ENCODE measurements at regions of chr2 and their contacts with region 1.

Region 1: GRCh38 chr2:128321784-128322714 is 3.4 kb upstream of the HS6ST1 start:
- DNase-seq: peak; percentile 51
- ATAC-seq: peak; percentile 67
- H3K4me3 ChIP-seq: peak overlapping the region; percentile 58 to 63
- H3K27ac ChIP-seq: peak overlapping the region; percentile 89
- H3K4me1 ChIP-seq: peaks cover 1 to 21% of the 10 kb centered on the region in 2 experiments; a peak in 3 of 4 replicates
- H3K27me3 ChIP-seq: no peaks in the 10 kb centered on the region
- CTCF ChIP-seq: peak; percentile 31 to 82 (median 75); a peak in 5 of 6 replicates
- POLR2A ChIP-seq: no peak
- RAD21 ChIP-seq: peak; percentile 61

Region 2: DNA sequence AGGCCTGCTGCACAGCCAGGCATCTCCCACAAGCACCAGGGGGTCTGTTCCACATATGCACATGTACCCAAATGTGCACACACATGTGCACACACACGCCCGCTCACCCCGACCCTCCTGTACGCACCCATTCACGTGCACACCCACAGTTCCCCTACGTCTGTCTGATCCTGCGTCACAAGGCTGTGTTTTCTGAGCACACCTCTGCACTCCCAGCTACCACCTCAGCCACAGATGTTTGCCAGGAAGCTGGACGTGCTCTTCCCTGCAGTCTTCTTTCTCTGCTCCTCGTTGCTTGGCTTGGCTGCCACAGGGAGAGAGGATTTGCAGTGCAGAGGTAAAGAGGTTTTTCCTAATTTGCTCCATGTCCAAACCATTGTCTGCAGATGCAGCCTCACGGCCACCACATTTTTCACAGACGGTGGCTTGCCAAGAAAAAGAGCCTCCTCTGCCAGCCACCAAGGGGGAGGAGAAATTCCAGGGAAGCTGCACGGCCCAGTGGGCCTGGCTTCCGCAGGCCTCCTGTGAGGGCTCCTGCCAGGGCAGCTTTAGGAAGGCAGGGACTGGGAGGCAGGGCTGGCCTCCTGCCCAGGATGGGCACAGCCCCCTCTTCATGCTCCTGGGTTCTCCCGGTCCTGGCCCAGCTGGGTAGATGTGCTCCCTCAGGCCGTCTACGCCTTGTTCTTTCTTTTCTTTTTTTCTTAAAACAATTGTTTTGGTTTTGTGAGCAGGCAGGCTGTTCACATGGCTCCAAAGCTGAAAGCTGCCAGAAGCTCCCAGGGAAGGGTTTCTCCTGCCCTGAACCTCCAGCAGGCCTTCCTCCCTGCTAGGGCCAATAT is 25.9 kb after region 1 on chr2:
- CTCF ChIA-PET with region 1: no interaction called
- POLR2A ChIA-PET with region 1: no interaction called
- RAD21 ChIA-PET with region 1: no interaction called
- intact Hi-C with region 1: no loop called
- DNase-seq: no peak
- ATAC-seq: no peak
- H3K4me3 ChIP-seq: no peak overlapping the region
- H3K27ac ChIP-seq: no peak overlapping the region
- H3K4me1 ChIP-seq: no peaks in the 10 kb centered on the region
- H3K27me3 ChIP-seq: no peaks in the 10 kb centered on the region
- CTCF ChIP-seq: no peak
- POLR2A ChIP-seq: no peak
- RAD21 ChIP-seq: no peak

Region 3: DNA sequence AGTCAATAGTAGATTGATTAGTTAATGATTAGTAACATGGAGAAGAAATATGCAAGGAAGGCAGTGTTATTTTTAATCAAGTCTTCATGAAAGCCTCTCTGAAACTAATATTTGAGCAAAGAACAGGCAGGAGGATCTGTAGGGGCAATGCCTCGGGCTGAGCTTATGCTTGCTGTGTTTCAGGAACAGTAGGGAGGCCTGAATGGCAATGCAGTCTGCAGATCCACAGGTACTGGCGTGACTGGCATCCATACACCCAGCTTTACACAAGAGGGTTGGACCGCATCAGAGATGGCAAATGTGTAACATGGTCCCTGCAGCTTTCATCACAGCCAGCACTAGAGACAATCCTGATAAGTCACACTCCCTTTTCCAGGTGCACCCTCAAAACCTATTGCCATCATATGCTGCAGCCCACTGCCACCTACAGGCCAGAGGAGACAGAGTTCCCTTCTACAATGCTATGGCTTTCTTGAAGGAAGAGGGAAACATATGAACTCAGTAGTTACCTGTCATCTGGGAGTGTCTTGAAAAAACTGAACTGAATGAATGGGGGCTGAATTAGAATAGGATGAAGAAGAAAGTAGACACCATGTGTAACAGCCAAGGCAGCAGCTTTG is 1075.0 kb after region 1 on chr2:
- CTCF ChIA-PET with region 1: no interaction called
- POLR2A ChIA-PET with region 1: no interaction called
- RAD21 ChIA-PET with region 1: no interaction called
- intact Hi-C with region 1: loop called (anchors 1 kb)
- DNase-seq: peak; percentile 16
- ATAC-seq: peak; percentile 90
- H3K4me3 ChIP-seq: no peak overlapping the region
- H3K27ac ChIP-seq: no peak overlapping the region
- H3K4me1 ChIP-seq: no peaks in the 10 kb centered on the region
- H3K27me3 ChIP-seq: peaks cover 9% of the 10 kb centered on the region; the same call in 1 of the 2 replicates
- CTCF ChIP-seq: peak; percentile 18 to 75 (median 75); a peak in 5 of 6 replicates
- POLR2A ChIP-seq: no peak
- RAD21 ChIP-seq: peak; percentile 69

Measured in HCT116 (cell line).